Posterior vena cava (tissue), 2 donors: ENCODE measurements at regions of chr6 and their contacts with region 1.

Region 1: DNA sequence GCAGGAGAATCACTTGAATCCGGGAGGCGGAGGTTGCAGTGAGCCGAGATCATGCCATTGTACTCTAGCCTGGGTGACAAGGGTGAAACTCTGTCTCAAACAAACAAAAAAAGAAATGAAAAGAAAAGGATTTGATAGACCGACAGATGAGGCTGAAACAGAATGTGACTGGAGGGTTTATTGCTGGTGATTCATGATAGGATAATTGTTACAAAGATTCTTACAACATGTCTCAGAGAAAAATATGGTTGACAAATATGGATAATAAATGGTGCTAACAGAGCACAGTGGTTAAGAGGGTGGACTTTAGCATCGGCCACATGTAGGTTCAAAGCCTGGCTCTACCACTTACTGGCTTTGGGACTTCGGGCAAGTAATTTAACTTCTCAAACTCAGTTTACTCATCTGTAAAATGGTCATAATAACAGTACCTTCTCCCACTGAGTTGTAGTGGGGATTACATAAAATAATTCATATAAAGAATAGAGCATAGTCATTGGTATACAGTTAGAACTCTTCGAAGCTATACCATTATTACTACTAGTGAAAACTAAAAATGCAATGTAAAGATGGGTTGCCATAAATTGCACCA is 131.9 kb downstream of the MAP3K7 start:
- DNase-seq: no peak

Region 2: DNA sequence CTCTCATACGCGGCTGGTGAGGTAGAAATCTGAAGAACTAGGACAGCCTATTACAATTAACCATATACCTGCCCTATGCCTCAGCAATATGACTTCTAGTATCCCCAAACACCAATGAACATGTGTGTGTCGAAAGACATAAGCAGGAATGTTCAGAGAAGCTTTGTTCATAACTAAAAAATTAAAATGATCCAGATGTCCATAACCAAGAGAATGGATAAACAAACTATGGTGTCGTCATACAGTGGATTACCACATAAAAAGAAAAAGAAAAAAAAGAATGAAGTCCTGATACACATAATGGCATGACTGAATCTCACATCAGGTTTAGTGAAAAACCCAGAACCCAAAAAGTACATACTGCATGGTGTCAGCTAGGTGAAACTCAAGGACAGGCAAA is 709.2 kb before region 1 on chr6:
- intact Hi-C with region 1: no loop called
- DNase-seq: no peak

Region 3: DNA sequence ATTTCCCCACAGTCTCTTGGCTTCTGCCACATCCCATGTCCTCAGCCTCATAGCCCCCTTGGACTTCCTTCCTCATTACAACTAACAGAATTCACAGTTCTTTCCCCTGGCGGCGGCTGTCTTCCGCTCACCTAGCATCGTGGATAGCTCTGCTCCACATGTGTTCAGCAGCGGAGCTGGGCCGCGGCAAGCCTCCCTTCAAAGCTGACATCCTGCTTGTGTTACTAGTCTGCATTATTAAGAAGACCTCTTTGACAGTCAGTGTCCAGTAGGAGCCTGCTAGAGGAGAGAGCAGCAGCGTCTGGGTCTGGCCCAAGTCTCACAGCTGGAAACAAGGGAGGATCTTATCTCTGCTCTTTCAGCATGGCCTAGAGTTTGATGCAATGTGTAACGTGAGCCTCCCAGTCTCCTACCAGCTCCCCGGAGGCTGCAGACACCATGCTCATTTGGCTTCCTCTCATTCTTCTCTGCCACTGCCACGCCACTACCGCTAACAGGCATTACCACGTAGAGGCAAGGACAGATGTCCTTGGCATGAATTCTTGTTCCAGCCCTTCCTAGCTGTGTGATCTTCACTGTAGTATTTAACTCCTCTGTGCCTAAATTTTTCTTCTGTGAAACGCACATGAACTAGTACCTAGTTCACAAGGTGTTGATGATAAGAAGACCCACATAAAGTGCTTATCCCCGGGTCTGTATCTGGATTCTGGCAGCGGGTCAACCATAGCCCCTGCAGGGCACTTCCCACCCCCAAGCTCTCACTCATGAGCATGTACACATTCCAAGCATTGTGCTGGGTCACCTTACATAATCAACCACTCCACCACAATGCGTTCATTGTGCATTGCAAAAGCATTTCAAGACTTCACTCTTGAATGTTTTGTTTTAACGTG is 51.2 kb before region 1 on chr6:
- intact Hi-C with region 1: loop called in 1 of 2 experiments (anchors 1 kb)
- DNase-seq: no peak

Region 4: DNA sequence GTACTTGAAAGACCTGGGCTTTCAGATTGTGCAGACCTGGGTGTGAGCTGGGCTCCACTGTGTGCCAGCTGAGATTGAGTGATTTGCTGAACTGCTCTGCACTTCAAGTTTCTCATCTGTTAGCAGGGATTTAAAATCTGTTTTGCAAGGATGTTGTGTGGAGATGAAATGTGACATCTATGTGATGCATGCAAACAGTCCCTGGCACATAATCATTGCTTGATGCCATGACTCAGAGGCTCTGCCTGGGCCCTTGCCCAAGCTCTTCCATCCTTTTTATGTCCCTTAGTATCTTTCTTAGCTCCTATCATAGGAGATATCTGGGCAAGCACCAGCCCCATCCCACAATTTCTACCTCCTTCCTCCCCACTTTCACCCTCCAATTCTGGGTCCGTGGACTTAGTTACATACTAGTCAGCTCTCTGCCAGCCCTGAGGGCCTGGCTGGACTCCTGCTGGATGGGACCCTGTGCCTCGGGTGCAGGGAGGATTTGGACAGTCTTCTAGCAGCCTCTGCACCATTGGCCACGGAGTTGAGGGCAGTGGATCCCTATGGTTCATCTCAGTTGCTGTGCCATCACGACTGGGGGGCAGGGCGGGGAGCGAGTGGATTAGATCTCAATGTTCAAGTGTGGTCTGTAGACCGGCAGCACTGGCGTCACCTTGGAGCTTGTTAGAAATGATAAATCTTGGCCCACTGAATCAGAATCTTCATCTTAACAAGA is 28.3 kb after region 1 on chr6:
- intact Hi-C with region 1: no loop called
- DNase-seq: no peak